Aorta (tissue), 5 donors: ENCODE measurements at regions of chr3 and their contacts with region 1.

Region 1: GRCh38 chr3:10945683-10946287 is 46.8 kb upstream of the SLC6A1 start:
- DNase-seq: peak; percentile 68 to 88
- ATAC-seq: peak; percentile 80
- H3K4me3 ChIP-seq: no peak overlapping the region
- H3K27ac ChIP-seq: no peak overlapping the region
- H3K4me1 ChIP-seq: no peaks in the 10 kb centered on the region
- H3K27me3 ChIP-seq: no peaks in the 10 kb centered on the region

Region 2: DNA sequence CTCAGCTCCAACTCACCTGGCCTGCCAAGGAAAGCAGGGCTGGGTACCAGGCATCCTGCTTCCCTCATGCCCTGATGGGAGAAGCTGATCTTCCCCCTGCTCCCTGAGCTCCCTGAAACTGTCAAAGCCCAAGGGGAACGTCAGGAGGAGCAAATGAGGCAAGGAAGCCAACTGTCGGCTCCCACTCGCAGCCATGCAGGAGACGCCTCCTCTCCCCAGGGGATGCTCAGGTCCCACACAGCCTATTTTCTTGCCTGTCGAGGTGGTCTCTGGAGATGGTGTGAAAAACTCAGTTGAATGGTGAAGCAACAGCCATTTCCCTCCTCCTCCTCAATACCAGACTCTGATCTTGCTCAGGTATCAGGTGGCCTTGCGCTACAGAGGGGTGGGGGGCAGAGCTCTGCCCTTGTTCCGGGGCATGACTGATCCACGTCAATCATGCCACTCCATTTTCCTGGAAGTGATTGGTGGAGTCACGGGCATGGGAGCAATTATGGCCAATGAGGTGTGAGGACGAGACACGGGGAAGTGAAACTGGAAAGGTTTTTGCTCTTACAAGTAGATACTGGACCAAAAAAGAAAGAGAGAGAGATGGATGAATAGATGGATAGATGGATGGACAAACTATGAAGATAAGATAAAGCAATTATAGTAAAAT is 105.0 kb after region 1 on chr3:
- intact Hi-C with region 1: no loop called
- DNase-seq: peak in 1 of 2 donors; percentile 41
- ATAC-seq: no peak
- H3K4me3 ChIP-seq: no peak overlapping the region
- H3K27ac ChIP-seq: no peak overlapping the region
- H3K4me1 ChIP-seq: no peaks in the 10 kb centered on the region
- H3K27me3 ChIP-seq: peaks cover 0 to 1% of the 10 kb centered on the region in 2 donors

Region 3: GRCh38 chr3:11335056-11335608 is 389.3 kb after region 1 on chr3:
- intact Hi-C with region 1: loop called (anchors 5 kb)
- DNase-seq: no peak
- ATAC-seq: peak; percentile 79
- H3K4me3 ChIP-seq: no peak overlapping the region
- H3K27ac ChIP-seq: no peak overlapping the region
- H3K4me1 ChIP-seq: no peaks in the 10 kb centered on the region
- H3K27me3 ChIP-seq: no peaks in the 10 kb centered on the region